Heart right ventricle (tissue), 16 donors: ENCODE measurements at regions of chr2 and their contacts with region 1.

Region 1: GRCh38 chr2:125696561-125696960 is 959.4 kb upstream of the GYPC start:
- DNase-seq: no peak
- ATAC-seq: no peak
- H3K4me3 ChIP-seq: no peak overlapping the region
- H3K27ac ChIP-seq: no peak overlapping the region
- H3K4me1 ChIP-seq: no peaks in the 10 kb centered on the region
- H3K27me3 ChIP-seq: no peaks in the 10 kb centered on the region
- CTCF ChIP-seq: no peak

Region 2: GRCh38 chr2:125684932-125685331 is 11.6 kb before region 1 on chr2:
- intact Hi-C with region 1: loop called in 1 of 10 experiments (anchors 1 kb)
- DNase-seq: no peak
- ATAC-seq: no peak
- H3K4me3 ChIP-seq: no peak overlapping the region
- H3K27ac ChIP-seq: no peak overlapping the region
- H3K4me1 ChIP-seq: no peaks in the 10 kb centered on the region
- H3K27me3 ChIP-seq: peaks cover 0 to 4% (median 0%) of the 10 kb centered on the region in 7 donors
- CTCF ChIP-seq: no peak